ENCODE measurements at regions of chr14 and their contacts with region 1.

Region 1: DNA sequence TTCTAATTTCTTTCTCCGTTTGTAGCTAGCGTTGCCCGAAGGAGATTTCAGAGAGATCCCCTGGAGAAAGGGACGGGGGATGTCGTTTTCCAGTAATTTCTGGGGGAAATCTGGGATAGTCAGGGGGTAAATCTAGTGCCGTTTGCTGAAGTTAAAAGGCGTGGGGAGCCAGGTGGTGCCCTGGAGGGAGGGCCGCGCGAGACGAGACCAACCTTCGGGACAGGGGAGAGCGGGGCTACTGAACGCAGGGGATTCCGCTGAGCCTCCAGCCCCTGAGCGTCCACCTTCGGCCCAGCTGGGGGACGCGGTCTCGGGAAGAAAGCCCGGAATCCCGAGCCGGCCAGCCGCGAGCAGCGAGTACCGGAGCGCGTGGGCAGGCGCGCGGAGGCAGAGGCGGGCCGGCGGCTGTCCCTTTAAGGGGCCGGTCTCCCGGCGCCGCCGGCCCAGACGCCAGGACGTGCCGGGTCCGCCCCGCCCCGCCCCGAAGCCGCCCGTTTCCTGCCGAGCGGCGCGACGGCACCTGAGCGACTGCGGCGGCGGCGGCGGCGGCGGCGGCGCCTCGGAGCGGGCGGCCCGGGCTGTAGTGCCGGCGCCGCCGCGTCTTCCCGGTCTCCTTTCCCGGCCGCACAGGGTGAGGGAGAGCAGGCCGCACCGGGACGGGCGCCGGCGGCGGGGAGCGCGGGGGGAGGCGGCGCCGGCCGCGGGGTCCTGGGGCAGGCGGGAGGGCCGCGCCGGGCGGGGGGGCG is at the start of gene KTN1:
- DNase-seq: peak; percentile 86 to 93 (median 92)
- ATAC-seq: peak; percentile 97
- H3K4me3 ChIP-seq: peak within 1 kb of the TSS; percentile 100
- H3K27ac ChIP-seq: peak within 1 kb of the TSS; percentile 96
- H3K4me1 ChIP-seq: peaks cover 2% of the 10 kb centered on the region
- H3K27me3 ChIP-seq: no peaks in the 10 kb centered on the region
- total RNA-seq, gene KTN1: 187 to 232 (median 214) TPM

Region 2: DNA sequence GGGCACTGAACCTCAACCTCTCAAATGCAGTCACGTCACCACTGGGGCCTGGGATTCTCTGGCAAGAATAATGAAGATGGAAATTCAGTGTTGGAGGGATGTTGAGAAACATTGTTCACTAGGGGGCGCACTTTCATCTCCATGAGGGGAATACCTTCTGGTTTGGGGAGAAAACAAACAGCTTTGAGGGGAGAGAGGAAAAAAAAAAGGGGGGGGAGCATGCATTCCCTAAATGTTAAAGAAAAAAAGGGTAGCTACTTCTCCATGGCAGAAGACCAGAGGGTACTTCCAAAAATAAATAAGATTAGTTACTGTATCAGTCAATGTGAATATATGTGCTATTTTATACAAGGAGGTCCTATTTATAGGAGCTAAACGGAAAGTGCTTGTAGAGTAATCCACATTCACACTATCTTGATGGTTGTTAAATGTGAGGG is 133.7 kb before region 1 on chr14:
- intact Hi-C with region 1: loop called in 1 of 4 experiments (anchors 10 kb)
- DNase-seq: peak in 1 of 3 donors; percentile 29
- ATAC-seq: peak; percentile 51 to 67
- H3K4me3 ChIP-seq: no peak overlapping the region
- H3K27ac ChIP-seq: no peak overlapping the region
- H3K4me1 ChIP-seq: peaks cover 1% of the 10 kb centered on the region
- H3K27me3 ChIP-seq: no peaks in the 10 kb centered on the region

Measured in right cardiac atrium (tissue), 5 donors.